T-cell (primary cell): ENCODE measurements at regions of chr2 and their contacts with region 1.

Region 1: GRCh38 chr2:59665021-59665420 is 888.4 kb downstream of the BCL11A start:
- DNase-seq: no peak
- ATAC-seq: no peak
- H3K4me3 ChIP-seq: no peak overlapping the region
- H3K4me3 Mint-ChIP-seq: no peak overlapping the region
- H3K27ac ChIP-seq: no peak overlapping the region
- H3K27ac Mint-ChIP-seq: no peak overlapping the region
- H3K4me1 ChIP-seq: no peaks in the 10 kb centered on the region
- H3K4me1 Mint-ChIP-seq: no peaks in the 10 kb centered on the region
- H3K27me3 ChIP-seq: no peaks in the 10 kb centered on the region
- H3K27me3 Mint-ChIP-seq: no peaks in the 10 kb centered on the region

Region 2: GRCh38 chr2:58757971-58758370 is 907.0 kb before region 1 on chr2:
- CTCF ChIA-PET with region 1: no interaction called
- POLR2A ChIA-PET with region 1: interaction called in 1 of 2 experiments, 10 read pairs
- DNase-seq: no peak
- ATAC-seq: no peak
- H3K4me3 ChIP-seq: no peak overlapping the region
- H3K4me3 Mint-ChIP-seq: no peak overlapping the region
- H3K27ac ChIP-seq: no peak overlapping the region
- H3K27ac Mint-ChIP-seq: no peak overlapping the region
- H3K4me1 ChIP-seq: no peaks in the 10 kb centered on the region
- H3K4me1 Mint-ChIP-seq: peaks cover 0 to 7% (median 0%) of the 10 kb centered on the region in 3 donors
- H3K27me3 ChIP-seq: no peaks in the 10 kb centered on the region
- H3K27me3 Mint-ChIP-seq: no peaks in the 10 kb centered on the region